CD8-positive, alpha-beta T cell (primary cell): ENCODE measurements at regions of chr19 and their contacts with region 1.

Region 1: GRCh38 chr19:2950286-2951124 is 5.7 kb upstream of the ZNF77 start:
- DNase-seq: peak; percentile 100
- ATAC-seq: peak; percentile 93
- H3K4me3 ChIP-seq: peak overlapping the region; percentile 77 to 80
- H3K4me3 Mint-ChIP-seq: peak overlapping the region; percentile 97
- H3K27ac ChIP-seq: peak overlapping the region; percentile 78 to 97
- H3K27ac Mint-ChIP-seq: peak overlapping the region; percentile 98
- H3K4me1 ChIP-seq: peaks cover 12% of the 10 kb centered on the region
- H3K4me1 Mint-ChIP-seq: peaks cover 32% of the 10 kb centered on the region
- H3K27me3 ChIP-seq: no peaks in the 10 kb centered on the region
- H3K27me3 Mint-ChIP-seq: no peaks in the 10 kb centered on the region
- CTCF ChIP-seq: no peak

Region 2: GRCh38 chr19:2887391-2887914 is 63.1 kb before region 1 on chr19:
- CTCF ChIA-PET with region 1: interaction called, 12 read pairs
- POLR2A ChIA-PET with region 1: no interaction called
- intact Hi-C with region 1: no loop called
- DNase-seq: peak in 3 of 9 experiments; percentile 18 to 54 (median 42)
- ATAC-seq: peak; percentile 41
- H3K4me3 ChIP-seq: no peak overlapping the region
- H3K4me3 Mint-ChIP-seq: no peak overlapping the region
- H3K27ac ChIP-seq: no peak overlapping the region
- H3K27ac Mint-ChIP-seq: no peak overlapping the region
- H3K4me1 ChIP-seq: no peaks in the 10 kb centered on the region
- H3K4me1 Mint-ChIP-seq: peaks cover 13% of the 10 kb centered on the region
- H3K27me3 ChIP-seq: no peaks in the 10 kb centered on the region
- H3K27me3 Mint-ChIP-seq: no peaks in the 10 kb centered on the region
- CTCF ChIP-seq: peak; percentile 76

Region 3: GRCh38 chr19:2962045-2962561 is 11.6 kb after region 1 on chr19:
- CTCF ChIA-PET with region 1: interaction called, 25 read pairs
- POLR2A ChIA-PET with region 1: interaction called, 4 read pairs
- intact Hi-C with region 1: loop called in 1 of 2 experiments (anchors 1 kb)
- DNase-seq: peak in 8 of 9 experiments; percentile 19 to 91 (median 54)
- ATAC-seq: peak; percentile 98
- H3K4me3 ChIP-seq: no peak overlapping the region
- H3K4me3 Mint-ChIP-seq: no peak overlapping the region
- H3K27ac ChIP-seq: no peak overlapping the region
- H3K27ac Mint-ChIP-seq: no peak overlapping the region
- H3K4me1 ChIP-seq: no peaks in the 10 kb centered on the region
- H3K4me1 Mint-ChIP-seq: peaks cover 4% of the 10 kb centered on the region
- H3K27me3 ChIP-seq: no peaks in the 10 kb centered on the region
- H3K27me3 Mint-ChIP-seq: no peaks in the 10 kb centered on the region
- CTCF ChIP-seq: peak; percentile 78

Region 4: DNA sequence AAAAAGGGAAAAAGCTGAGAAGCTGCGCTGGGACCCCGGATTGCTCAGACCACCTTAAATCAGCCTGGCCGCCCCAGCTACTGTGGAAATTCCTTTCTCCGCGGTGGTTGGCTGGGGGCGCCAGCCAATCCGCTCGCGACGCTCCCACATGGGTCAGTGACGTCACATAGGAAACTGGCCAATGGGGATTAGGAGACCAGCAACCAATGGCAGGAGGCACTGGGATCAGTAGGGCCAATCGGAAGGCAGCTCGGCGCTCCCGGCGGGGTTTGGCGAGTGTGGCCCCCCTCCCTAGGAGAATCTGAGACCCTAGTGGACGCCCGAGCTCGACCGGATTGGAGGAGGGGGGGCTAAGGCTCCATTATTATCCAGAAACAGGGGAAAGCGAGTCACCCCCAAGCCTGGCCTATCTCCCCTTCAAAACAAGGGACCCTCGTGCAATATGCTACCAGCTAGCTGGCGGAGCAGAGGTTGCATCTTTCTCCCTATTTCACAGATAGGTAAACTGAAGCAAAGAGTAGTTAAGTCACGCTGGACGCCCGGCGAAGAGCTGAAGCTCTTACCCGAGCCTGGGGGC is 85.1 kb after region 1 on chr19:
- CTCF ChIA-PET with region 1: interaction called, 4 read pairs
- POLR2A ChIA-PET with region 1: interaction called, 13 read pairs
- intact Hi-C with region 1: loop called (anchors 1 kb)
- DNase-seq: peak; percentile 89 to 99 (median 94)
- ATAC-seq: peak; percentile 87
- H3K4me3 ChIP-seq: peak overlapping the region; percentile 63 to 80
- H3K4me3 Mint-ChIP-seq: peak overlapping the region; percentile 93
- H3K27ac ChIP-seq: peak overlapping the region; percentile 47 to 79
- H3K27ac Mint-ChIP-seq: peak overlapping the region; percentile 96
- H3K4me1 ChIP-seq: peaks cover 18% of the 10 kb centered on the region
- H3K4me1 Mint-ChIP-seq: peaks cover 19% of the 10 kb centered on the region
- H3K27me3 ChIP-seq: no peaks in the 10 kb centered on the region
- H3K27me3 Mint-ChIP-seq: no peaks in the 10 kb centered on the region
- CTCF ChIP-seq: no peak

Region 5: DNA sequence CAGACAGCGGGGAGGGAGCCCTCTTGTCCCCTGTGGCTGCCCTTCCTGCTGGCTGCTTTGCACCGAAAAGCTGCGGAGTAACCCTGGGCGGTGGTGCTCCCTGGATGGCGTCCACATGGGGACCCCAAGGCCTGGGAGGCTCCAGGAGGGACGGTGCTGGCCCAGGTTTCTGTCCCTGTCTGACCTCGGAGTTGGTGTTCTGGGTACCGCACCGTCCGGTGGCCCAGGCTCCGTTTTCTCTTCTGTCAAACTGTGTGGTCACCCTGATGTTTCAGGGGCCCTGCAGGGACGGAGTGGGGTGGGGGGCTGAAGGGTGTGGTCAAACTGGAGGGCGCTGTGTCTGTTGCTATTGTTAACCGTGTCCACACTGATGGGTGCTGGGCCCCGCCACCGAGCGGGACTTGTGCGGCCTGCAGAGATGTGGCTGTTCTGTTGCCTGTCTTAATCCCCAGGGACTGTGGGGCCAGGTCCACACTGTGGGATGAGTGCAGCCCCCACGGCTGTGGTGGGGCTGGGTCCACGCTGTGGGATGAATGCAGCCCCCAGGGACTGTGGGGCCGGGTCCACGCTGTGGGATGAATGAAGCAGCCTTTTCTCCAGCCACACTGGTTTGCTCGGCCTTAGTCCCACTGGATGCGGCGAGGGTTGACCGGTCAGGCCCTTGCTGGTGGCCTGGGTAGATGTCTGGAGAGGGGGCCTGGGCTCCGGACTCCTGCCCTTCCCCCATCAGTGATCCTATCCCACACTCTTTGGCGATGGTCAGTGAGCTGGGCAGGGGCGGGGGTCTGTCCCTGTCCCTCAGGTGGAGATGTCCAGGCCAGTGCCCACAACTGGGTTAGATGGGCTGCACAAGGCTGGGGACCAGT is 150.6 kb after region 1 on chr19:
- CTCF ChIA-PET with region 1: interaction called, 55 read pairs
- POLR2A ChIA-PET with region 1: interaction called, 4 read pairs
- intact Hi-C with region 1: loop called in 1 of 2 experiments (anchors 1 kb)
- DNase-seq: peak in 1 of 9 experiments; percentile 3
- ATAC-seq: no peak
- H3K4me3 ChIP-seq: no peak overlapping the region
- H3K4me3 Mint-ChIP-seq: no peak overlapping the region
- H3K27ac ChIP-seq: no peak overlapping the region
- H3K27ac Mint-ChIP-seq: no peak overlapping the region
- H3K4me1 ChIP-seq: peaks cover 35% of the 10 kb centered on the region
- H3K4me1 Mint-ChIP-seq: peaks cover 16% of the 10 kb centered on the region
- H3K27me3 ChIP-seq: peaks cover 0 to 18% of the 10 kb centered on the region in 2 experiments
- H3K27me3 Mint-ChIP-seq: peaks cover 5% of the 10 kb centered on the region
- CTCF ChIP-seq: no peak